GM13977 (cell line): ENCODE measurements at regions of chr19 and their contacts with region 1.

Region 1: GRCh38 chr19:5803752-5804515 is 933 bp upstream of the NRTN start:
- DNase-seq: peak; percentile 99
- CTCF ChIP-seq: peak; percentile 97

Region 2: DNA sequence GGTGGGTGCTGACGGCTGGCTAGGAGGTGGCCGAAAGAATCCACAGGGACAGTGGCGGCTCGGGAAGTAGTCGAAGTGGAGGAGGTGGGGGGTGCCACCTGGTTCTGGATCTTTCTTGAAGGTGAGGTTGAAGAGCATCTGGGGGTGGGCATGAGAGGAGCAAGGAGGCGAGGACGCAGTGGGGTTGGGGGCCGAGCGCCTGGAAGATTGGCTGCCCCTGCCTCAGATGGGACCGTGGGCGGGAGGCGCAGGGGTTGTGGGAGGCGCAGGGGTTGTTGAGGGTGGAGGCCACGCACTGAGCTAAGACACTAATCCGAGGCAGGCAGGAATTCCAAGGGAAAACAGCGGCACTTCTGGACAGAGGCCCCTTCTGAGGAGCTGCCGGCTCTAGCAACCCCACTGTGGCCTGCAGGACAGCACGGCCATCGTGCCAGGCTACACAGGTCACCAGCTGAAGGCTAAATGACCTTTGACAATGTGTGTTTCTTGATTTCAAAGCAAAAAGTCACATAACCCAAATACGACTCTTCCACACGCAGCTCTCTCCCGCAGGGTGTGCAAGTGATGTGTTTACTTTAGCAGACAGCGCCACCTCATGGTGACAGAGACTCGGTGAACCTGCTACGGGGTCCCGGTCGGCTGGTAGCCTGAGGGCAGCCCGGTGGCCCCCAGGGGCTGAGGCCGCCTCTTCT is 218.1 kb after region 1 on chr19:
- in situ Hi-C with region 1: loop called (anchors 25 kb)
- DNase-seq: peak; percentile 90
- CTCF ChIP-seq: peak; percentile 89